AG04449 (cell line): ENCODE measurements at regions of chr1 and their contacts with region 1.

Region 1: DNA sequence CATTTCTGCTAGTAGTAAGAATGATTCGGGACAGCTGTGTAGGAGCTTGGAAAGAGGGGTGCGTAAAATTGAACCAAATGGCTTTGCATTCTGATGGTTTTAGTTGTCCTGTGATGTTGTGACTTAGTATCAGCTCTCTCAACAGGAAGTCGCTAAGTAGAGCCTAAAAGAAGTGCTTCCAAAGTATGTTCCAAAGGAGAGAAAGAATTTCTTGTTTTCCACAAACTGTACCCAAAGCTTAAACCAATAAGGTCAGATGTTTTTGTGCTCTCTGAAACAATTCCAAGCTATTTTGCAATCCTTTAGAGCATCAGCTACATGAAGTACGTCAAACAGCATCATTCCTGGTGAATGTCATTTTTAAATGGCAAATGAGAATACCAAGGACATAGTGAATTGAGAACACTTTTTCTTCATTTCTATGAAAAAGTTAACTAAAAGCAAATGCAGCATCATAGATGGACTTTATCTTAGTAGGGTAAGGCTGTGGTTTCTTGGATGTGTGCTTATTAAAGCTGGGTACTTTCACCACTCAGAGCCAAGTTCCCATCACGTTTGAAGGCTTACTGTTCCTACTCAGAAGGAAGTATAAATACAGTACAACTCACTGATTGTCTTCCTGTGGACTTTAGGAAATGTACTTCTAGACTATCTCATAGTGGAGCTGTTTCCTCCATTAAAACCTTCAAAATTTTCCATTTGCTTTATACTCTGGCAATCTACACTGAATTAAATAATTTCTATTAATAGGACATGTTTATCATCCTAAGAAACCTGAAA is 148.6 kb downstream of the C1orf21 start:
- DNase-seq: peak; percentile 29
- H3K4me3 ChIP-seq: no peak overlapping the region
- CTCF ChIP-seq: no peak

Region 2: GRCh38 chr1:184545595-184545994 is 10.2 kb after region 1 on chr1:
- CTCF ChIA-PET with region 1: interaction called, 11 read pairs
- POLR2A ChIA-PET with region 1: no interaction called
- DNase-seq: peak; percentile 40
- H3K4me3 ChIP-seq: no peak overlapping the region
- CTCF ChIP-seq: no peak